Activated B cell treated with CpG ODN at 0.5 μM for 24 hours (primary cell): ENCODE measurements at regions of chr1 and their contacts with region 1.

Region 1: GRCh38 chr1:155504207-155504606 is 58.4 kb downstream of the ASH1L start:
- DNase-seq: no peak
- ATAC-seq: peak; percentile 62
- H3K4me3 Mint-ChIP-seq: no peak overlapping the region
- H3K27ac Mint-ChIP-seq: peak overlapping the region; percentile 30
- H3K4me1 Mint-ChIP-seq: peaks cover 54% of the 10 kb centered on the region
- H3K27me3 Mint-ChIP-seq: no peaks in the 10 kb centered on the region
- CTCF ChIP-seq: no peak

Region 2: DNA sequence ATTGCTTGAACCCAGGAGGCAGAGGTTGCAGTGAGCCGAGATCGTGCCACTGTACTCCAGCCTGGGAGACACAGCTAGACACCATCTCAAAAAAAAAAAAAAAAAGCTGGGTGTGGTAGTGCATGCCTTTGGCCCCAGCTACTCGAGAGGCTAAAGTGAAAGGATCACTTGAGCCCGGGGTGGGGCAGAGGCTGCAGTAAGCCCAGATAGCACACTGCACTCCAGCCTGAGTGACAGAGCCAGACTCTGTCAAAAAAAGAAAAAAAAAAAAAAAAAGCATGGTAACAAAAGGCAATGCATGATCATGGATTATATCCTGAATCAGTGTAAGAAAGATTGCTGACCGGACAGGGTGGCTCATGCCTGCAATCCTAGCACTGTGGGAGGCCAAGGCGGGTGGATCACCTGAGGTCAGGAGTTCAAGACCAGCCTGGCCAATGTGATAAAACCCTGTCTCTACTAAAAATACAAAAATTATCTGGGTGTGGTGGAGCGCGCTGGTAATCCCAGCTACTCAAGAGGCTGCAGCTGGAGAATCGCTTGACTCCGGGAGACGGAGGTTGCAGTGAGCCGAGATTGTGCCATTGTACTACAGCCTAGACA is 107.2 kb before region 1 on chr1:
- CTCF ChIA-PET with region 1: no interaction called
- POLR2A ChIA-PET with region 1: no interaction called
- intact Hi-C with region 1: loop called (anchors 5 kb)
- DNase-seq: no peak
- ATAC-seq: no peak
- H3K4me3 Mint-ChIP-seq: no peak overlapping the region
- H3K27ac Mint-ChIP-seq: no peak overlapping the region
- H3K4me1 Mint-ChIP-seq: no peaks in the 10 kb centered on the region
- H3K27me3 Mint-ChIP-seq: no peaks in the 10 kb centered on the region
- CTCF ChIP-seq: no peak

Region 3: DNA sequence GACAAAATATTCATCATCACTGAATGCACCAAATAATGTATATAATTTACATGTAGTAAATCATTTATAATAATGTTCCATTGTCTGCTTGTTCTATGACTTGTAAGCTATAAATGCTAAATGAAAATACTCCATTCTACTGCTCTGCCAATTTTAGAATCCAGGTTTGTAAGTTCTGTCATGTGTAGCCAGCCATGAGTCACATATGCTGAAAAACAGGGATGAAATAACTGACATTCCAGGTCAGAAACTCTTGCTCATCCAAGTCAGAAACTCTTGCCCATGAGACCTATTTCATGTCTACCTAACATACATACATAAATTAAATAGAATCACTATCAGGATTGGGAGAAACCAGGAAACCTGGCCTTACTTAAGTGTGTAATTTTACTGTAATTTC is 37.2 kb before region 1 on chr1:
- CTCF ChIA-PET with region 1: interaction called, 6 read pairs
- POLR2A ChIA-PET with region 1: interaction called, 6 read pairs
- intact Hi-C with region 1: loop called (anchors 5 kb)
- DNase-seq: no peak
- ATAC-seq: no peak
- H3K4me3 Mint-ChIP-seq: no peak overlapping the region
- H3K27ac Mint-ChIP-seq: peak overlapping the region; percentile 86
- H3K4me1 Mint-ChIP-seq: peaks cover 58% of the 10 kb centered on the region
- H3K27me3 Mint-ChIP-seq: no peaks in the 10 kb centered on the region
- CTCF ChIP-seq: no peak

Region 4: DNA sequence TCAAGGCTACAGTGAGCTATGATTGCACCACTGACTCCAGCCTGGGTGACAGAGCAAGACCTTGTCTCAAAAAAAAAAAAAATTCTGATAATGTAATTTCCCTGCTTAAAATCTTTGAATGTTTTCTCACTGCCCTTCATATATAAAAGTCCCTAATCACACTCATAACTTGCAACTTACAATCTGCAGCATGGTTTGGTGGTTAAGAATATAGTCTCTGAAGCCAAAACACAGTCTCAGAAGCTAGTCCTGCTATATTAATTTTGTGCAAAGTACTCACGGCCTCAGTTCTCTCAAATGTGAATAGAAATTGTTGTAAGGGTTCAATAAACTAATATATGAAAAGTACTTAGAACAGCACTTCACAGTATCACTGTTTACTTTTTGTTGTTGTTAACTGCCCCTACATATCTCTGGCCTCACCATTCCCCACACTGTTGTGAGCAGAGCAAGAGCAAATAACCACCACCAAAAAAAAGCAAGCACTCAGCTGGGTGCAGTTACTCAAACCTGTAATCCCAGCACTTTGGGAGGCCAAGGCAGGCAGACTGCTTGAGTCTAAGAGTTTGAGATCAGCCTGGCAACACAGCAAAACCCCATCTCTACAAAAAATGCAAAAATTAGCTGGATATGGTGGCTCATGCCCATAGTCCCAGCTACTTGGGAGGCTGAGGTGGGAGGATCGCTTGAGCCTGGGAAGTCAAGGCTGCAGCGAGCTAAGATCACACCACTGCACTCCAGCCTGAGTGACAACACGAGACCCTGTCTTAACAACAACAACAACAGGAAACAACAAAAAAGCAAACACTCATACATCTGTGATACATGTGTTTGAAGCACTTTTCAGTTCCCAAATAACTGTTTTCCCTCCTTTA is 36.0 kb after region 1 on chr1:
- CTCF ChIA-PET with region 1: interaction called, 5 read pairs
- POLR2A ChIA-PET with region 1: interaction called, 3 read pairs
- intact Hi-C with region 1: loop called (anchors 5 kb)
- DNase-seq: no peak
- ATAC-seq: no peak
- H3K4me3 Mint-ChIP-seq: no peak overlapping the region
- H3K27ac Mint-ChIP-seq: peak overlapping the region; percentile 57
- H3K4me1 Mint-ChIP-seq: peaks cover 52% of the 10 kb centered on the region
- H3K27me3 Mint-ChIP-seq: no peaks in the 10 kb centered on the region
- CTCF ChIP-seq: no peak

Region 5: DNA sequence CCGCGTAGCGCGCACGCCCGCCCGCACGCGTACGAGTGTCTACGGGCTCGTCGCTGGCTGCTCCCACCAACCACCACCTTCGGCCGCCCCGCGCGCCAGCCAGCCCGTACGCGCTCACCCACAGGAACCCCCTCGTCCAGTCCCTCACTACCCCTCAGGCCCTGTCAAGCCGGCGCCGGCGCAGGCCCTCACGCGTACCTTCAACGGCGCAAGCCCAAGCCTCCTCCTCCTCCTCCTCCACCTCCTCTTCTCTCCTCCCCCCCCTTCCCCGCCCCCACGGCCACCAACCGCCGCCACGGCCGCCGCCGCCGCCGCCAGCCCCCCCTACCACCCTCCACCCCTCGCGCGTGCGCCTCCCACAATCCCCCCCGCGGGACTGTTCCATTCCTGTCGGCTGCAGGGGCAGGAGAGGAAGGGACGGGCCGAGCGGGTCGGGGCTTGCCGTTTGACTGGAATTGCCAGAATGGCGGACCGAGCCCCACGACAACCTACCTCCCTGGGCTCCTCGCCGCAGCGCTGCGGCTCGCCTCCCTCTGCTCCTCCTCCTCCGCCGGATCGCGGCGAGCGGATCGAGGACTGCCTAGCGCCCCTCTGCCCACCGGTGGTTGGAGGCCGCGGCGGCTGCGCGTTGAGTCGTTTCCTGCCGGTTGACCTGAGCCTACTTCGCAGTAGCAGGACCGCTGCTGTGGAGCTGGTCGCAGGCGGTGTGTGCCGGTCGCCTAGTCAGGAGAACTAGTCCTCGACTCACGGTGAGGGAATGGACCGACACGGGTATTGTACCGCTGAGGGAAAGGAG is 58.6 kb after region 1 on chr1 and contains the start of gene ASH1L:
- CTCF ChIA-PET with region 1: interaction called, 5 read pairs
- POLR2A ChIA-PET with region 1: interaction called, 15 read pairs
- intact Hi-C with region 1: no loop called
- DNase-seq: peak; percentile 90
- ATAC-seq: peak; percentile 80
- H3K4me3 Mint-ChIP-seq: peak within 1 kb of the TSS; percentile 99
- H3K27ac Mint-ChIP-seq: peak within 1 kb of the TSS; percentile 98
- H3K4me1 Mint-ChIP-seq: peaks cover 41% of the 10 kb centered on the region
- H3K27me3 Mint-ChIP-seq: no peaks in the 10 kb centered on the region
- CTCF ChIP-seq: no peak
- total RNA-seq, gene ASH1L: 75.6 and 90.6 TPM in 2 replicates